Left cardiac atrium (tissue), 4 donors: ENCODE measurements at regions of chr1 and their contacts with region 1.

Region 1: GRCh38 chr1:245156081-245156735 is 1.4 kb downstream of the KIF26B start:
- DNase-seq: peak; percentile 81
- ATAC-seq: peak; percentile 79 to 93

Region 2: GRCh38 chr1:245380790-245381535 is 224.8 kb after region 1 on chr1:
- intact Hi-C with region 1: loop called in 1 of 2 experiments (anchors 10 kb)
- DNase-seq: no peak
- ATAC-seq: no peak

Region 3: DNA sequence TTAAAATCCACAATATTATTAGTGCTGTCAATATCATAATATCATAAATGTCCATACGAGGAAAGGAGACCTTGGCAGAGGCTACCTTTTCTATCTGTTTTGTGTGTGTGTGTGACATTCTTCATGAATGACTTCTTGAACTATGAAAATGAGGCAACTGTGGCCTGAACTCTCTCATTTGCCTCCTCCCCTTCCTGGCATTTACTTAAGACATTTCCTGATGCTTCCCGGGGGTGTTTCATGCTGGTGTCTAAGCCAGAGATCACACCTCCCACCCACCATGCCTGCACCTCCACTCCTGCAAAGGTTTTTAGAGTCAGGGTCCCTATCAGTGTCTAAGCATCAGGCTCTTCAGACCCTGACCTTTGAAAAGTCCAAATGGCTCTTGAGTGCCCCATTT is 419.5 kb after region 1 on chr1:
- intact Hi-C with region 1: loop called in 1 of 2 experiments (anchors 5 kb)
- DNase-seq: no peak
- ATAC-seq: no peak

Region 4: GRCh38 chr1:246002725-246003441 is 846.7 kb after region 1 on chr1:
- intact Hi-C with region 1: loop called (anchors 2 to 5 kb)
- DNase-seq: peak; percentile 90
- ATAC-seq: peak; percentile 72 to 78

Region 5: GRCh38 chr1:246117066-246117791 is 961.0 kb after region 1 on chr1:
- intact Hi-C with region 1: loop called in 1 of 2 experiments (anchors 10 kb)
- DNase-seq: no peak
- ATAC-seq: peak; percentile 71 to 83

Region 6: DNA sequence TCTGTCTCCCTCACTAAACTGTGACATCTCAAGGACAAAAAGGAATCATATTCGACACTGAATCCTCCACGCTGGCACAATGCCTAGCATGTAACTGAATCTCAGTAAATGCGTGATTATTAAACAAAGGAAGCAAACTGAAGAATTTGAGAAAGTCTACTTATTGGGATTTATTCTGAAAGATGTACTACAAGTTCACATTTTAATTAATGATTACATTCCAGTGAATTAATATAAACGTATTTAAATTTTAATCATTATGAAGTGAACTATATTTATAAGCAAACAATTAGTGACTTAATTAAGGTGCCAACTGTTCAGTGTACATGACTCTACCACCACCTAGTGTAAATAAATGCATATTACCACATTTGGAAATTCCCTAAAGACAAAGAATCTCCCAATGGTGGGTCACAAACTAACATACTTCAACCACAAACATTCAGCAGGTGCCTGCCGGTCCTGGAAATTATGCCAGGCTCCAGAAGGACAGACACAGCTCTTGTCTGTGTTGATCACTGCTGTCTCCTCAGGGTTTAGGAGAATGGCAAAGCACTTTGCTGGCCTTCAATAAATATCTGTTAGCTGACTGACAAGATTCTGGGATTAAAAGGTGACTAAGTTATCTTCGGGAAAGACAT is 1294.5 kb after region 1 on chr1:
- intact Hi-C with region 1: loop called in 1 of 2 experiments (anchors 10 kb)
- DNase-seq: no peak
- ATAC-seq: no peak

Region 7: GRCh38 chr1:246497331-246497915 is 1341.2 kb after region 1 on chr1:
- intact Hi-C with region 1: loop called in 1 of 2 experiments (anchors 2 kb)
- DNase-seq: no peak
- ATAC-seq: peak in 1 of 2 donors; percentile 35